ENCODE measurements at regions of chr10 and their contacts with region 1.

Region 1: DNA sequence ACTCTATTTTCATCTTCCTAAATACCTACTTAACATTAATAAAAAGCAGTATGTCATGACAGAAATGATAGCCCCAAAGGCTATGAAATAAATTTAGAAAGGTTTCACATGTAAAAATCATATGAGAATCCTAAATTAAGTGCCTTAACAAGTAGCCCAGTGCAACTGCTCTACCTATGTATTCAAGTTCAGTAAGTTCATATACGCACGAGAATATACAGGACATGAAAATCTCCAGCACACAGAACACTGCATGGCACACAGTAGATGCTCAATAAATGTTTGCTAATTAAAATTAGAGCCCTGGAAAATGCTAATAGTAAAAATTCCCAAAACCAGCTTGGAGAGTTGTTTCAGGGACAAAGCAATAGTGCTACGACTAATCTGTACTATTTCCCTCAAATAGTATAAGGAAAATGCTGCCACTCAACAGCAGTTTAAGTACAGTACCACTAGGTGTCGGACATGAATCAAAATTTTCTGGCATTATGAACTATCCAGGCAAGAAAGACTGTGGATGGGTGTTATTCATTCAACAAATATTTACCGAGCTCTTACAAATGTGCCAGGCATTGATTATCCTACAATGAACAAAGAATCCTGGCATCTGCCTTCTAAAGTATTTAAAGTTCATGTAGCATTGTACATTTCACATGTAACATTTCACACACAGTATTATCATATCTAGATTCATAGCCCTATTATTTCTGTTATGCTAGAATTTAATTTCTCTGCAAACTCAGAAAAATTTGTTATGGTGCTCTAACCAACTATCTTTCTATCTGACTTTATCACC is 80.9 kb downstream of the ARHGAP21 start:
- DNase-seq: no peak
- ATAC-seq: peak; percentile 94

Region 2: DNA sequence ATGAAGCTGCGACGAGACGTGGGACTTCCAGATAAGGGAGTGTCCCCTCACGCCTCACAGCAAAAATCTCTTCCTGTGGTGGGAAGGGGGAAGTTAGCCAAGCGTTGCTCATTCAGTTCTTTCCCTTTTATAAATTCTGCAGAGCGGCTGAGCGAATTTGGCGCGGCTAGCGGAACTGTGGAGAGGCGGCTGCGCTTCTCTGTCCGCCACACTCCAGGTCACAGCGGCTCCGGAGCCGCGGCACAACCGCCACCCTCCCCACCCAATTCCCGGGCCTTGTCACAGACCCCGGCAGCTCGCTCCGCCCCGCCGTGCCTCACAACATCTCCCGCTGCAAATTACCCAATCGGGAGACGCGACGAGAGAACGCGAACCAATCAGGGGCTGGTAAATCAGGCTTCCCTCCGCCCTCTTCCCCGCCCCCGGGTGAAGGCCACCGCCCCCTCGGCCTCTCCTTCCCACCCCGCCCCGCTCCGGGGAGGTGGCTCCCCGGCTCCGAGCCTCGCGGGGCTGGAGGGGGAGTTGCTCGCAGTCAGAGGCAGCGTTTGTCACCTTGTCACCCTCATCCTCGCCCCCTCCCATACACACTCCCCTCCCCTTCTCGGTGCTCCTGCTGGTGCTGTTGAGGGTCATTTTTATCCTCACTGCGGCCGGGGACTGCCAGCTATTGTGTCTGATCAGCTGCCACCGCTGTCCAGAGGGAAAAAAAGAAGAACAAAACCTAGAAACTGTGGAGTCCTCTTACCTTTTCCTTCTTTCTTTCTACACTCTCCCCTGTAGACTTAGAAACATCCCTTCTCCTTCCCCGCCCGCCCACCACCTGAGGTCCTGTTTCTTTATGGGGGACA is 81.8 kb after region 1 on chr10:
- intact Hi-C with region 1: loop called (anchors 5 kb)
- DNase-seq: peak; percentile 99
- ATAC-seq: peak; percentile 93

Region 3: DNA sequence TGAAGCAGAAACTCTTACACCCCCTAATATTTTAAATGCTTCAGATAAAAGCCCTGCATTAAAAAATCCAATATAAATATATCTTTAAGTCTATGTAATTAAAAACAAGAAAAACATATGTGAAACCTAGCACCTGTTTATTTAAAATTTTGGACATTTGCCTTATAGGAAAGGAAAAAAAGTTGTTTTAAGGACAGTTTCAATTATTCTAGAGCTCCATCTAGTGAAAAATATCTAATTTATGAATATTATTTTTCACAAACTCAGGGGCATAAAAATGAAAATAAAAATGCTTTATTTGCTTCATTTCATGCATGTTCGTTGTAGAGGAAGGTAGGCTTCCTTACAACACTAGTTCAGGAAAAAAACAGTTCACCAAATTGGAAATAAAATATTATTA is 347.0 kb after region 1 on chr10:
- intact Hi-C with region 1: loop called (anchors 10 kb)
- DNase-seq: no peak
- ATAC-seq: no peak